MCF 10A (cell line): ENCODE measurements at regions of chr4 and their contacts with region 1.

Region 1: DNA sequence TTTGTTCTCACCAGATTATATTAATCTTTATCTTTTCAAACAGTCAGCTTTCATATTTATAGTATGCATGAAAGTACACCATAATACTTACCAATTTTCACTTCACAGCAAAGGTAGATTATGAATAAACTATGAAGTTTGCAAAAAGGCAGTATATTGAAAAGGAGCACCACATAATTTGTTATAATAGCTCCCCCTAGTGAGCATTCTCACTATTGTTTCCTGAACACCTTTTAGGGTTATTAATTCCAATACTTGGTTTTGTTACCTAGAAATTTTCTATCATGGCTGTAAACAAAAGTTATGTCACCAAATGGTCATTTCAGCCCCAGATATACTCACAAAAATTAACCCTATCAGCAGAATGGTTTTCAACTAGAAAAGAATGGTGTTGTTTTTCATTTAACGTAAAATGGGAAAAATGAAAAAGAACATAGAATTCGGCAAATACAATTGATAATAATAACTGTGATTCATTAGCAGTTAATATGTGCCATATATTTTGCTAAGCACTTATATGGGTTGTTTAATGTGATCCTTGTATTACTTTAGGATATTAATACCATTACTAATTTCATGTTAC is 30.2 kb upstream of the NKX6-1 start:
- DNase-seq: peak; percentile 51
- H3K4me3 Mint-ChIP-seq: no peak overlapping the region
- H3K27ac Mint-ChIP-seq: no peak overlapping the region
- H3K4me1 Mint-ChIP-seq: peaks cover 16% of the 10 kb centered on the region
- H3K27me3 Mint-ChIP-seq: peaks cover 17% of the 10 kb centered on the region
- CTCF ChIP-seq: peak; percentile 53

Region 2: GRCh38 chr4:84492737-84493091 is 36.5 kb before region 1 on chr4:
- CTCF ChIA-PET with region 1: no interaction called
- POLR2A ChIA-PET with region 1: no interaction called
- intact Hi-C with region 1: no loop called
- DNase-seq: no peak
- H3K4me3 Mint-ChIP-seq: no peak overlapping the region
- H3K27ac Mint-ChIP-seq: no peak overlapping the region
- H3K4me1 Mint-ChIP-seq: no peaks in the 10 kb centered on the region
- H3K27me3 Mint-ChIP-seq: peaks cover 60% of the 10 kb centered on the region
- CTCF ChIP-seq: no peak

Region 3: GRCh38 chr4:84511703-84512102 is 17.6 kb before region 1 on chr4:
- CTCF ChIA-PET with region 1: interaction called, 19 read pairs
- POLR2A ChIA-PET with region 1: no interaction called
- intact Hi-C with region 1: no loop called
- DNase-seq: no peak
- H3K4me3 Mint-ChIP-seq: no peak overlapping the region
- H3K27ac Mint-ChIP-seq: no peak overlapping the region
- H3K4me1 Mint-ChIP-seq: no peaks in the 10 kb centered on the region
- H3K27me3 Mint-ChIP-seq: no peaks in the 10 kb centered on the region
- CTCF ChIP-seq: no peak